ENCODE measurements at regions of chr2 and their contacts with region 1.

Region 1: GRCh38 chr2:176140513-176141317 is 10.6 kb upstream of the HOXD4 start:
- H3K4me3 Mint-ChIP-seq: peak overlapping the region; percentile 39
- H3K27ac Mint-ChIP-seq: no peak overlapping the region
- H3K4me1 Mint-ChIP-seq: peaks cover 17% of the 10 kb centered on the region
- H3K27me3 Mint-ChIP-seq: peaks cover 97% of the 10 kb centered on the region

Region 2: DNA sequence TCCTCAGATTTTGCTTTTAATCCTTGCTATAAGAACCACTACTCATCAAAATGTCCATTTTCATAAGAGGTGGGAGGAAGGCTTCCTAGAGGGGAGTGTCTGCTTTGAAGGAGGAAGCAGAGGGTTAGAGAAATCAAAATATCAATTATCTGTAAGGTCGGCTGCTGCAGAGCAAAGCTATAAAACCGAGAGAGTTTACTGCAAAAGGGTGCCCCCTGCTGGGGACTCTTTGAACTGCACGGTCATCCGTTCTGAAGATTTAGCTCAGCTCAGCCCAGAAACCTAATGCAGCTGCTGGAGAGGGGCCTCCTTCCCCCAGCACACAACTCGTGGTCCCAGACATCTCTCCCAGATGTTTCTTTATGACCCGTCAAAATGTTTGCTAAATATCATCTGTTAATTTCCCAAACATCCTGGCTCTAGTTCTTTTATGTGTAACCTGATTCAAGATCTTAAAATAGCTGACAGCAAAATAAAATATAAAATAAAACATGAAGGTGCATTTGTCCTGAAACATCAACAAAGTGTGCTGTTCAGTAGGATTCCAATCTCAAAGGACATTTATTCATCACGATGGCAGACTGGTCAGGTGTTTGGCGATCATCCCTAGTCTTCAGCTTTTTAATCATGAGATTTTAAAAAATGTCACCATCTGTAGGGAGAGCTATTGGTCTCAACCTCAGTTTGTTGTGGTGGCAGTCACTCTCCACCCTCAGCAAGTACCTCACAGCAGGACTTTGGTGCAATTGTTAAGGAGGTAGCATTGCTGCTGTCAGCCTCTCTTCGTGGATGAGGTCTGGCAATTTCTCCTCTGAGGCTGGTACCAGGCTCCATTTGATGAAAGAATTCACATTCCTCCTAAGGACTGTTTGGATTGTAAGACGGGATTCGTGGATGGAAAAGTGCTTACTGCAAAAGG is 314.4 kb after region 1 on chr2:
- intact Hi-C with region 1: loop called (anchors 1 kb)
- H3K4me3 Mint-ChIP-seq: no peak overlapping the region
- H3K27ac Mint-ChIP-seq: no peak overlapping the region
- H3K4me1 Mint-ChIP-seq: no peaks in the 10 kb centered on the region
- H3K27me3 Mint-ChIP-seq: peaks cover 21% of the 10 kb centered on the region

Region 3: GRCh38 chr2:176554101-176555048 is 413.7 kb after region 1 on chr2:
- intact Hi-C with region 1: loop called (anchors 5 kb)
- H3K4me3 Mint-ChIP-seq: peak overlapping the region; percentile 52
- H3K27ac Mint-ChIP-seq: no peak overlapping the region
- H3K4me1 Mint-ChIP-seq: peaks cover 13% of the 10 kb centered on the region
- H3K27me3 Mint-ChIP-seq: peaks cover 39% of the 10 kb centered on the region

Region 4: DNA sequence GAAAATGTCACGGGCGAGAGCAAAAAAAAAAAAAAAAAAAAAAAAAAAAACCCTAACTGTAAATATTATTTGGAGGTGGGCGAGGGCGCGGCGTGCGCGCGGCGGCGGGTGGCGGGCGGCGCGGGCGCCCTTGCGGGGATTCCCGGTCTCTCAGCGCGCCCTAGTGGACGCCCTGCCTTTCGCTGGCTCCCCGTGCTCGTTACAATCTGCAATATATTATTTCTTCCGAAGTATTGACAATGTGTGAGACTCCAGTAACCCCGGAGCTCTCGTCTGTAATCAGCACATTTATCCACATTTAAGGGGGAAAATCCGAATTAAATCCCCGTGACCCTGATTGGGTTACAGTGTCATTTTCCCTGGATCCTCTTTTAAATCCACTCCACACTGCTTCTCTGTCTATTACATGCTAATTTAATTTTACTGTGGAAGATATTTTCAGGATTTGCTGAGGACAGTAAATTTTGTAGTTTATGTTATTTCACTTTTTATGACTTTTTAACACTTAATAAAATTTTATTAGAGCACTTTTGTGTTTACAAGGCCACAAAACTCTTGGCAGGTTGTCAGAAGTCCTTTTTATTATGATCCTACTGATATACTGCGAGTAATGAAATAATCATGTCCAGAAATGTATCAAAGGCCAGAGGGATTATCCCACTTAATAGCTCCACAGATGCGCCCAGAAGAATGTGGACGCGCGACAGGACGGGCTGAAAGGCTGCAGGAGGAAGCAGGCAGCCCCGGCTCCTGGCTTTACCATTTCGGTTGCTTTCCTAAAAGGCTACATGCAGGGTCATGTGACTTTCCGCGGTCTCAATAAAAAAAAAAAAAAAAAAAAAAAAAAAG is 497.7 kb after region 1 on chr2:
- intact Hi-C with region 1: loop called (anchors 5 kb)
- H3K4me3 Mint-ChIP-seq: peak overlapping the region; percentile 77
- H3K27ac Mint-ChIP-seq: no peak overlapping the region
- H3K4me1 Mint-ChIP-seq: no peaks in the 10 kb centered on the region
- H3K27me3 Mint-ChIP-seq: peaks cover 58% of the 10 kb centered on the region

Measured in dendritic cell treated with granulocyte-macrophage colony-stimulating factor and Interleukin-4, amounts not matched to agents 40 ng/mL and 50 ng/mL, for 4 days (primary cell).